Keratinocyte (primary cell): ENCODE measurements at regions of chr3 and their contacts with region 1.

Region 1: GRCh38 chr3:32522682-32523081 is 20.0 kb upstream of the CMTM6 start:
- DNase-seq: no peak
- H3K4me3 ChIP-seq: no peak overlapping the region
- H3K27ac ChIP-seq: no peak overlapping the region
- H3K4me1 ChIP-seq: no peaks in the 10 kb centered on the region
- H3K27me3 ChIP-seq: no peaks in the 10 kb centered on the region
- CTCF ChIP-seq: no peak

Region 2: GRCh38 chr3:32406486-32407408 is 115.9 kb before region 1 on chr3:
- dilution Hi-C with region 1: no loop called
- DNase-seq: no peak
- H3K4me3 ChIP-seq: peak overlapping the region in 2 of 3 experiments; percentile 1 to 10
- H3K27ac ChIP-seq: peak overlapping the region; percentile 81
- H3K4me1 ChIP-seq: peaks cover 41% of the 10 kb centered on the region
- H3K27me3 ChIP-seq: no peaks in the 10 kb centered on the region
- CTCF ChIP-seq: no peak

Region 3: DNA sequence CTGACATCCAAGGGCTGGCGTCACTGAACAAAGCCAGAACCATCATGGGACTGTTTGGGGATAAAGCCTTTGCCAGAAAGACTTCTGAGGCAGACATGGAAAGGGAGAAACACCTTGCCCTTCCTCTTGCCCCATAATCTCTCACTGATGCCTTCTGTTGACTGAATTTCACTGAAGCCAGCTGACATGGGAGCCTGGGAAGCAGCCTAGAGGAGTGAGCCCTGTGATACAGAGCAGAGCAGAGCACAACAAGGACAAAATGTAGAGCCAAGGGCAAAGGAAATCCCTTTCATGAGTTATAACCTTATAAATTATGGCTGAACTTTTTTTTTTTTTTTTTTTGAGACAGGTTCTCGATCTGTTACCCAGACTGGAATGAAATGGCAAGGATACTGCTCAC is 152.5 kb after region 1 on chr3:
- dilution Hi-C with region 1: loop called (anchors 10 kb)
- DNase-seq: no peak
- H3K4me3 ChIP-seq: no peak overlapping the region
- H3K27ac ChIP-seq: no peak overlapping the region
- H3K4me1 ChIP-seq: no peaks in the 10 kb centered on the region
- H3K27me3 ChIP-seq: no peaks in the 10 kb centered on the region
- CTCF ChIP-seq: no peak